Left lung (tissue), 14 donors: ENCODE measurements at regions of chr6 and their contacts with region 1.

Region 1: DNA sequence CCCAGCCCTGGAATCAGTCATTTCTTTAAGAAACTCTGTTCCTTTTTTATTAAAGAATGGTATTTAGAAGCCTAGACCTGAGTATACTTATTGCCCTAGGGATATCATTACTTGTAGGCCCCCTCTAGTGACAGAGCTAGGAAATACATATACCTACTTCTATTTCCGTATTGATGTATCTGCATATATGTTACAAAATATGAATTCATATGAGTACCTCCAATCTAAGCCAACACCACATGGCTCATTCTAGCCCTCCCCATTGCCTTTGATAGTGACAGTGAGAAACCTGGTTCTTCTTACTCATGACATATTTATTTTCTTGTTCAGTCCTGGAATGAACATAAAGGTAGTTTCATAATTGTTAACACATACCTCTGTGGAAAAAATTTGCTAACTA is 137.2 kb downstream of the FARS2 start:
- DNase-seq: peak in 1 of 4 donors; percentile 12
- ATAC-seq: peak; percentile 69
- H3K4me3 ChIP-seq: no peak overlapping the region
- H3K27ac ChIP-seq: no peak overlapping the region
- H3K4me1 ChIP-seq: no peaks in the 10 kb centered on the region
- H3K27me3 ChIP-seq: no peaks in the 10 kb centered on the region
- CTCF ChIP-seq: peak; percentile 13 to 36

Region 2: GRCh38 chr6:5132731-5133341 is 265.7 kb before region 1 on chr6:
- intact Hi-C with region 1: no loop called
- DNase-seq: peak in 3 of 4 donors; percentile 64 to 90 (median 80)
- ATAC-seq: peak; percentile 90
- H3K4me3 ChIP-seq: no peak overlapping the region
- H3K27ac ChIP-seq: peak overlapping the region; percentile 16 to 50
- H3K4me1 ChIP-seq: peaks cover 0 to 11% of the 10 kb centered on the region in 2 donors
- H3K27me3 ChIP-seq: no peaks in the 10 kb centered on the region
- CTCF ChIP-seq: no peak

Region 3: DNA sequence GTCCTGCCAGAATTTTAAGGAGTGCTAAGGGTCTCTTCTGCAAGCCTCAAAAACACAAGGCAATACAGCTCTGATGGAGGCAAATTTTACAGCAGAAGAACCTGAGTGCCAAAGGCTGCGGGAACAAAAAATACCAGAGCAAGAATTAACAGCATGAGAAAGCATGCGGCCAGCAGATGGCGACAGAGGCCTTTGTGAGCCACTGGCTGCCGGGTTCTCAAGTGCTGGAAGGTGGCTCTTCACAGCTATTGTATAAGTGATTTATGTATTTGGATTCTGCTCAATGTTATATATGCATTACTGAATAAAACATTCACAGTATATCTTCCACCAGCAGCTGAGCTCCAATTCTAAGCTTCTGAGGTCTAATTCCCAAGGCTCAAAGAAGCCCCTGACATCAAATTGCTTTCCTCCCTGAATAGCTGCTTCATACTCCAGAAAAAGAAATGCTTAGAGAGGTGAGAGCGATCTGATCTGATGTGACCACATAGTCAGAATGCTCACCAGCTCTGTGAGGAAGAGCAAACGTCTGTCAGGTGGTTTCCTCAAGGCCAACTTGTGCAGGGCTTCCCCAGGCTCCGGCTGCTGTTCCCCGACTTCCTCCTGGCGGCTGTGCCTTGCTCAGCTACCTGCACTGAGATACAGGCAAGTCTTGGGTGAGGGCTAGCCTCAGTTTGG is 254.8 kb before region 1 on chr6:
- intact Hi-C with region 1: loop called in 1 of 2 experiments (anchors 10 kb)
- DNase-seq: peak; percentile 73 to 91 (median 82)
- ATAC-seq: peak; percentile 85
- H3K4me3 ChIP-seq: no peak overlapping the region
- H3K27ac ChIP-seq: no peak overlapping the region
- H3K4me1 ChIP-seq: peaks cover 0 to 3% of the 10 kb centered on the region in 2 donors
- H3K27me3 ChIP-seq: no peaks in the 10 kb centered on the region
- CTCF ChIP-seq: peak; percentile 73 to 91